Activated B cell treated with CpG ODN at 0.5 μM for 24 hours (primary cell): ENCODE measurements at regions of chrX and their contacts with region 1.

Region 1: DNA sequence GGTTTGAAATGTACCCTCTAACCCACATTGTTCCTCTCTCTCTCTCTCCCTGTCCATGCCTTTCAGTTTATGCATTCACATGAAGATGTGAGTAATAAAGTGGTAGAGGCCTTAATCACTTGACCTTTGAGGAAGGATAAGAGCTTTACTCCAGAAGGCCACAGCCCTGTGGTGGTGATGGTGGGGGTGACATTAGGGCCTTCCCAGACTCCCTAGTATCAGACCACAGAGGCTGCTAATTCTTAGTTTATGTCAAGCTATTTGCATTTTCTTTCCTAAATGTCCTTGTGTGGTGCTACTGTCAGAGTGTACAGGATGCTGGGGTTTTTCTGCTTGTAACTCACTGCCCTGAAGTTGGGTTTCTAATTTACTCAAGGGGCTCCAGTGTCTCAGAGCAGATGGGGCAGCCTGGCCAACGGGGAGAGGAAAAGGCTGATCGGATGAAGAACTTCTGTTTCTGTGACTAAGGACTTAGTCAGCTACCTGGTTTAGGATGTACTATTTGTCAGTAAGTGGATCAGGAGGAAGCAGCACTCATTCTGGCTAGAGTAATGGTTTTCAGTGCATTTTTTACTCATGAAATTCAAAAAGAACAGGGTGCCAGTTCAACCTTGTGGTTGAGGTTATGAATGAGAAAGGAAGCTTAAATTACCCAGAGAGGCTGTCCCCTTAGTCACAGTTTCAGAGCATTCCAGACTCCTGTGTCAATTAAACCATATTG is 509.6 kb upstream of the DIPK2B start:
- DNase-seq: no peak
- ATAC-seq: peak; percentile 88
- H3K4me3 Mint-ChIP-seq: peak overlapping the region; percentile 38
- H3K27ac Mint-ChIP-seq: peak overlapping the region; percentile 62
- H3K4me1 Mint-ChIP-seq: peaks cover 30% of the 10 kb centered on the region
- H3K27me3 Mint-ChIP-seq: no peaks in the 10 kb centered on the region
- CTCF ChIP-seq: no peak

Region 2: GRCh38 chrX:45191383-45191782 is 518.9 kb before region 1 on chrX:
- CTCF ChIA-PET with region 1: no interaction called
- POLR2A ChIA-PET with region 1: no interaction called
- intact Hi-C with region 1: no loop called
- DNase-seq: no peak
- ATAC-seq: no peak
- H3K4me3 Mint-ChIP-seq: peak overlapping the region; percentile 32
- H3K27ac Mint-ChIP-seq: peak overlapping the region; percentile 77
- H3K4me1 Mint-ChIP-seq: peaks cover 24% of the 10 kb centered on the region
- H3K27me3 Mint-ChIP-seq: no peaks in the 10 kb centered on the region
- CTCF ChIP-seq: no peak

Region 3: GRCh38 chrX:45621376-45622041 is 88.7 kb before region 1 on chrX:
- CTCF ChIA-PET with region 1: no interaction called
- POLR2A ChIA-PET with region 1: no interaction called
- intact Hi-C with region 1: loop called (anchors 10 kb)
- DNase-seq: no peak
- ATAC-seq: no peak
- H3K4me3 Mint-ChIP-seq: no peak overlapping the region
- H3K27ac Mint-ChIP-seq: no peak overlapping the region
- H3K4me1 Mint-ChIP-seq: no peaks in the 10 kb centered on the region
- H3K27me3 Mint-ChIP-seq: no peaks in the 10 kb centered on the region
- CTCF ChIP-seq: no peak

Region 4: DNA sequence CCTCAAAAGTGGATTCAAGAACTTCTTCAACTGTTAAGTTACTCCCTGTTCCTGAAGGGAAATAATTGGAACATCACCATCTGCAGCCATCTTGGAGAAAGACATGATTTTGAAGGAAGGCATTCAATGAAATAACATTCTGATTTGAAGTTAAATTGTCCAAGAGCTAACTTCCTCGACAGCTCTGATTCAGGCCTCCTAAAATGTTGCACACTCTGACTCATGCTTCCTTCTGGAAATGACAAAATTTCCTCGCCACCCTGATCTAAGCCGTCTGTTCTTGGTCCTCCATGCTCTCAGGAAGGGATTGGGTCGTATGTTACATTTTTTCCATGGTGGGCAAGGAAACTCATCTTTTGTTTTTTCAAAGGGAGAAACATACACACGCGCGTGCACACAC is 12.7 kb before region 1 on chrX:
- CTCF ChIA-PET with region 1: no interaction called
- POLR2A ChIA-PET with region 1: no interaction called
- intact Hi-C with region 1: no loop called
- DNase-seq: no peak
- ATAC-seq: no peak
- H3K4me3 Mint-ChIP-seq: no peak overlapping the region
- H3K27ac Mint-ChIP-seq: no peak overlapping the region
- H3K4me1 Mint-ChIP-seq: no peaks in the 10 kb centered on the region
- H3K27me3 Mint-ChIP-seq: peaks cover 2% of the 10 kb centered on the region
- CTCF ChIP-seq: no peak